T-cell (primary cell): ENCODE measurements at regions of chr13 and their contacts with region 1.

Region 1: DNA sequence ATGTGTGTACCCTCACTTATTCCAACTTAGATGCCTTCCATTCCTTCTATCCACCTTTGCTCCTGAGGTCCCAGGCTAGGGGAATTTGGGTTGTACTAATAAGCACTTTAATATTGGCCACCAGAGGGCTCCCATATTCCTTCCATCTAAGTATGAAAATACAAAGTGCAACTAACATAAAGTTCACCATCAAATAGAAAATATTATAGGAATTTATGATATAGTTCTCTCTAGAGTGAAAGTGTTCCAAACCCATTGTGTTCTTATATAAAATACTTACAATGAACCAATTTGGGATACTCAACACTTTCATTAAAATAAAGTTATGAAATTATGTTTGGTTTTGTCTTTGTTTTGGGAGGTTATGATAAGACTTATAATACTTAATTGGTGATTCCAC is 62.3 kb downstream of the ITGBL1 start:
- DNase-seq: peak in 9 of 35 experiments; percentile 3 to 65 (median 13)
- ATAC-seq: no peak
- H3K4me3 ChIP-seq: no peak overlapping the region
- H3K4me3 Mint-ChIP-seq: no peak overlapping the region
- H3K27ac ChIP-seq: no peak overlapping the region
- H3K27ac Mint-ChIP-seq: no peak overlapping the region
- H3K4me1 ChIP-seq: no peaks in the 10 kb centered on the region
- H3K4me1 Mint-ChIP-seq: peaks cover 6 to 11% (median 8%) of the 10 kb centered on the region in 3 donors
- H3K27me3 ChIP-seq: no peaks in the 10 kb centered on the region
- H3K27me3 Mint-ChIP-seq: peaks cover 3 to 11% of the 10 kb centered on the region in 2 donors

Region 2: DNA sequence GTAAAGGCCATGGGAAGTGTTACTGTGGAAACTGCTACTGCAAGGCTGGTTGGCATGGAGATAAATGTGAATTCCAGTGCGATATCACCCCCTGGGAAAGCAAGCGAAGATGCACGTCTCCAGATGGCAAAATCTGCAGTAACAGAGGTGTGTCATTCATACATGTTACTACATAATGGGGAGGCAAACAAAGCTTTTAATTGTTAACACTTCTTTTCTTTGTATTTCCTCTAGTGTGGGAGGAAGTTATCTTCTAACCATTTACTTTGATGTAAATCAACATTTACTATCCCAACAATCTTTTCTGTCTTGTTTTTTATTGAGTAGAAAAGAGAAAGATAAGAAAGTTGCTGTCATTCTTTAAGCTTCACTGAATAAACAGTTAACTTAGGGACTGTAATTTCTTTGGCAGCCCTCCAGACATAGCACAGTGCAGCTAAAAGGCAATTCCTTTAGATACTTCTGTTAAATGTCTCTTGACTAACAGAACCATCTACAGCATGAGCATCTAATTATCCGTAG is 64.6 kb after region 1 on chr13:
- CTCF ChIA-PET with region 1: no interaction called
- POLR2A ChIA-PET with region 1: no interaction called
- DNase-seq: no peak
- ATAC-seq: no peak
- H3K4me3 ChIP-seq: no peak overlapping the region
- H3K4me3 Mint-ChIP-seq: no peak overlapping the region
- H3K27ac ChIP-seq: no peak overlapping the region
- H3K27ac Mint-ChIP-seq: no peak overlapping the region
- H3K4me1 ChIP-seq: no peaks in the 10 kb centered on the region
- H3K4me1 Mint-ChIP-seq: no peaks in the 10 kb centered on the region
- H3K27me3 ChIP-seq: no peaks in the 10 kb centered on the region
- H3K27me3 Mint-ChIP-seq: peaks cover 0 to 3% of the 10 kb centered on the region in 2 donors

Region 3: GRCh38 chr13:101673360-101674105 is 158.7 kb after region 1 on chr13:
- CTCF ChIA-PET with region 1: no interaction called
- POLR2A ChIA-PET with region 1: no interaction called
- DNase-seq: no peak
- ATAC-seq: no peak
- H3K4me3 ChIP-seq: no peak overlapping the region
- H3K4me3 Mint-ChIP-seq: no peak overlapping the region
- H3K27ac ChIP-seq: no peak overlapping the region
- H3K27ac Mint-ChIP-seq: no peak overlapping the region
- H3K4me1 ChIP-seq: no peaks in the 10 kb centered on the region
- H3K4me1 Mint-ChIP-seq: no peaks in the 10 kb centered on the region
- H3K27me3 ChIP-seq: peaks cover 0 to 2% of the 10 kb centered on the region in 2 experiments
- H3K27me3 Mint-ChIP-seq: no peaks in the 10 kb centered on the region

Region 4: DNA sequence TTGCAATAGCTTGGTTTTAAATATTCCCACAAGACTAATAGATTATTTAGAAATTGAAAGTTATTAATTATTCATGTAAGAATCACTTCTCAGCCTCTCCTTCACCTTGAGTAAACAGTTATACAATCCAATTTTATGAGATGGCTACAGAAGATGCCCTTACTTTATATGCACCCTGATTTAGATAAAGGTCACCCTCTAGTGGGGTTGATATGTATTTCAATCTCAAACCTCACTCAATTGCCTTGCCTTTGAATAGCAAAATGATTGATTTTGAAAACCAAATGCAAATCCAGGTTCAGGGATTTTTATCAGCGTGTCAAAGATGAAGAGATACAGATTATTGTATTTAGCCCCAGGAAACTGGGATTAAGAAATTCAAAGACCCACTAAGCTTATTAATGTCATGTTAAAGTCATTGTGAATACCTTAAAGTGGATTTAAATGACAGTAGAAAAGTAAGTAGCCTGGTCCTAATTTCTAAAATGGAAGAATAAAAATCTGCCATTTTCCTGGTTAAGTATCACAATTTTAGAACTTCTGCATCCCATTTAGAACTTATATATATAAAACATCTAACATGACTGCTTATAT is 242.8 kb after region 1 on chr13:
- CTCF ChIA-PET with region 1: interaction called, 4 to 31 read pairs
- POLR2A ChIA-PET with region 1: no interaction called
- DNase-seq: peak in 2 of 35 experiments; percentile 2 to 52
- ATAC-seq: peak in 2 of 4 experiments; percentile 47 to 60
- H3K4me3 ChIP-seq: no peak overlapping the region
- H3K4me3 Mint-ChIP-seq: no peak overlapping the region
- H3K27ac ChIP-seq: no peak overlapping the region
- H3K27ac Mint-ChIP-seq: no peak overlapping the region
- H3K4me1 ChIP-seq: no peaks in the 10 kb centered on the region
- H3K4me1 Mint-ChIP-seq: no peaks in the 10 kb centered on the region
- H3K27me3 ChIP-seq: peaks cover 0 to 3% of the 10 kb centered on the region in 2 experiments
- H3K27me3 Mint-ChIP-seq: peaks cover 7 to 29% of the 10 kb centered on the region in 2 donors

Region 5: DNA sequence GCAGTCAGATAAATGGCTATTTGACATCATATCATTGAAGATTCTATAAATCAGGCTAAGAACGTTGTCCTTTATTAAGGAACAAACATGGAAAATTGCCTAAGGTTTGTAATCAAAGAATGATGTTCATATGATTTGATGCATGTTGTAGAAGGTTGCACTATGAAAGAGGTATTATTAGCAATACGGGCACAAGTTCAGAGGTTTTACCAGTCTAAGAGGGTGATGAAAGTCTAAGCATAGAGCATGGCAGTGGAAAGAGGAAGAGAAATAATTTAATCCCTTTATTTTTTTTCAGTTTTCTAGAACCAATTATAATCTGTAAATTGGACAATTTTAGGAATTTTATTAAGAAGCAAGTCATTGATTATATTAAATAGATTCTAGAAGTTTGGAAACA is 436.3 kb after region 1 on chr13:
- CTCF ChIA-PET with region 1: no interaction called
- POLR2A ChIA-PET with region 1: interaction called in 1 of 2 experiments, 14 read pairs
- DNase-seq: no peak
- ATAC-seq: no peak
- H3K4me3 ChIP-seq: no peak overlapping the region
- H3K4me3 Mint-ChIP-seq: no peak overlapping the region
- H3K27ac ChIP-seq: no peak overlapping the region
- H3K27ac Mint-ChIP-seq: no peak overlapping the region
- H3K4me1 ChIP-seq: no peaks in the 10 kb centered on the region
- H3K4me1 Mint-ChIP-seq: peaks cover 7 to 11% (median 10%) of the 10 kb centered on the region in 3 donors
- H3K27me3 ChIP-seq: no peaks in the 10 kb centered on the region
- H3K27me3 Mint-ChIP-seq: peaks cover 3% of the 10 kb centered on the region in 2 donors

Region 6: DNA sequence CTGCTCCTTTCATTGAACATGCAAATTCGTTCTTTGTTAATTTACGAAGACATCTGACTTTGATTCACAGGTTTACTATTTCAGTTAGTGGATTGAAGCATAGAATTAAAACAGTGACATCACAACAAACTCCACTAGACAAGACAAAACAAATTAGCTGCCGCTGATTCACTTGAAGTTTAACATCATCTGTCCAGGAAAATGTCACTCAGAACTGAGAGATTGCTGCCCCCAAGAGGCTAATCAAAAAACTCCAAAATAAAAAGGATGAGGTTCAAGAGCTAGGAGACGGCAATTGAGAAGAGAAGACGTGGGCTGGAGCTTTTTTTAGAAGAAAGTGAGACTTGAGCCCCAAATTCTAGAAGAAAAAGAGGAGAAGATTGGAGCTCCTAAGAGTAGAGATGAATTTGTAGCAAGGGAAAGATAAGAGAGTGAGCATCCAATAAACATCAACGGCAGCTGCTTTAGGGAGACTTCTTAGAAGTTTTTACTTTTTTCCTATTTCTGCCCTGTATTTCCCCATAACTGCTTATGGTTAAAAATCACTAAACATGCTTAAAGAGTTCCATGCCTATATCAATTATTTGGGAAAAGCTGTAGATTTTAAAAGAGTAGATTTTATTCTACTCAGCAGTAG is 1041.2 kb after region 1 on chr13:
- CTCF ChIA-PET with region 1: interaction called in 1 of 2 experiments, 15 read pairs
- POLR2A ChIA-PET with region 1: interaction called in 1 of 2 experiments, 4 read pairs
- DNase-seq: peak in 1 of 35 experiments; percentile 50
- ATAC-seq: no peak
- H3K4me3 ChIP-seq: no peak overlapping the region
- H3K4me3 Mint-ChIP-seq: no peak overlapping the region
- H3K27ac ChIP-seq: no peak overlapping the region
- H3K27ac Mint-ChIP-seq: no peak overlapping the region
- H3K4me1 ChIP-seq: no peaks in the 10 kb centered on the region
- H3K4me1 Mint-ChIP-seq: peaks cover 0 to 4% (median 4%) of the 10 kb centered on the region in 3 donors
- H3K27me3 ChIP-seq: no peaks in the 10 kb centered on the region
- H3K27me3 Mint-ChIP-seq: peaks cover 2 to 8% of the 10 kb centered on the region in 2 donors